ENCODE measurements at regions of chr1 and their contacts with region 1.

Region 1: DNA sequence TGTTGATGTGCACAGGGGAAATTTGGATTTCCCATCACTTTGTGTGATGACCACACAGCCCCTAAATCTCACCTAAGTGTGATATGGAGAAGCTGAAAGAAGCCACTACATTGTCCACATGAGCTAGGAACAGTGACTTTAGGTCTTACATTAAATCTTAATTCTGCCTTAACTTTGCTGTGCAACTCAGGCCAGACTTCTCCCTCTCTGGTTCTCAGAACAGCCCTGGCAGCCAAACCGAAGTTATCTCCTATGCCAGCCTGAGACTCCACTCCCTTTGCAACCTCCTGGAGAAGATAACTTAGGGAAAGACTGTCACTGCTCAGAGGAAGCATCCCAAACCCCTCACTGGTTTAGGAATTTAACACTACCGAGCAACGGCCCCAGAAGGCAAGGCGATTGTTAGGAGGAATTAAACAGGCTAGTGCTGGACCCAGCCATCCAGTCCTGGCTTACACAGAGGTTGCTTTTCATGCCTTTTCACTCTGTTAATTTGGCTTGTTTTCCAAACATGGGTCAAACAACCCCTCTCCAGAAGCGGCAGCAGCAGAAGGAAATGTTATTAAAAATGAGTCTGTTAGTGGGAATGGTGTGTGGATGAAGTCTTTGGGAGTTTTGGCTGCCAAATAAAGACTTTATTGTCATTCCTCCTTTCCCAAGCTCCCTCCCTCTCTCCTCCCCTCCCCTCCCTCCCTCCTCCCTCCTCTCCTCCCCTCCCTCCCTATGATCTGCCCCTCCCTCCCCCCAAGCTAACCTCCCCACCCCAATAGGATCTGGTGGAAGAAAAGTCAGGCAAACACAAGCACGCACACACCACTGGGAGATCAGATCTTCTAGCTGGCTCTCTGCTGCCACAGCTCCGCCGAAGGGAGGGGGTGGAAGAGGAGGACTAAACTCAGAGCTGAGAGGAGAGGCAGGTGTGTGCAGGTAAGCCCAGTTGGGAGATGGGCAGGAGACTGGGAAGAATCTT is at the start of gene PRELP:
- DNase-seq: peak in 2 of 4 experiments; percentile 44 to 46
- ATAC-seq: no peak
- H3K4me3 ChIP-seq: no peak within 1 kb of the TSS
- H3K27ac ChIP-seq: no peak within 1 kb of the TSS
- H3K4me1 ChIP-seq: no peaks in the 10 kb centered on the region
- H3K27me3 ChIP-seq: peaks cover 29 to 60% of the 10 kb centered on the region in 2 experiments
- CTCF ChIP-seq: no peak
- EP300 ChIP-seq: no peak
- POLR2A ChIP-seq: no peak
- RAD21 ChIP-seq: no peak
- polyA plus RNA-seq, gene PRELP: not detected

Region 2: DNA sequence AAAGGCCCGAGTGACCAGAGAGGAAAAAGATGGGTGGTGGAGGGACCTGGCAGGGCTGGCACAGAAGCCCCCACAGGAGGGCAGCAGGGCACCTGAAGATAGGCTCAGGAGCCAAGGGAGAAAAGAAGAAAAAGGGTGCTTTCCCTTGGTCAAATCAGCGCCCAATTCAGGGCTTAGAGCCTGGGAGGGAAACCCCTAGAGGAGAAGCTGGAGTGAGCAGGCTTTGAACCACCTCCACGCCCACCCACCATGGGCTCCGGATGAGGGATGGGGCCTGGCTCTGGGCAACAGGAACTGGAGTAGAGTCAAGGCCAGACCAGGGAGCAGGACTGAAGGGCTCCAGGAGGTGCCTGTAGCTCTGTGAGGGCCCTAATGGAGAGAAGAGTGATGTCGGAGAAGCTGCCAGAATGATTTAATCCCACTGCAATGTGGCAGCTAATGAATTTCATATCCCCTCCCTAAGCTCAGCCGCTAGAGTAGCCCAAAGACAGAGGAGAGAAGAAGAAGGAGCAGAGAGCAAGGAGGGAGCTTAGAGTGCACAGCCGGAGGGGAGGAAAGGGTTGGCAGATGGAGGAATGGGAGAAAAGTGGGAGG is 11.7 kb before region 1 on chr1:
- CTCF ChIA-PET with region 1: no interaction called
- POLR2A ChIA-PET with region 1: interaction called, 20 read pairs
- in situ Hi-C with region 1: no loop called
- intact Hi-C with region 1: no loop called
- DNase-seq: no peak
- ATAC-seq: no peak; the same call in 2 of the 3 replicates
- H3K4me3 ChIP-seq: no peak overlapping the region
- H3K27ac ChIP-seq: no peak overlapping the region
- H3K4me1 ChIP-seq: no peaks in the 10 kb centered on the region
- H3K27me3 ChIP-seq: peaks cover 51 to 57% of the 10 kb centered on the region in 2 experiments
- CTCF ChIP-seq: no peak
- EP300 ChIP-seq: no peak
- POLR2A ChIP-seq: no peak
- RAD21 ChIP-seq: no peak

Measured in K562 (cell line).